A673 (cell line): ENCODE measurements at regions of chr1 and their contacts with region 1.

Region 1: DNA sequence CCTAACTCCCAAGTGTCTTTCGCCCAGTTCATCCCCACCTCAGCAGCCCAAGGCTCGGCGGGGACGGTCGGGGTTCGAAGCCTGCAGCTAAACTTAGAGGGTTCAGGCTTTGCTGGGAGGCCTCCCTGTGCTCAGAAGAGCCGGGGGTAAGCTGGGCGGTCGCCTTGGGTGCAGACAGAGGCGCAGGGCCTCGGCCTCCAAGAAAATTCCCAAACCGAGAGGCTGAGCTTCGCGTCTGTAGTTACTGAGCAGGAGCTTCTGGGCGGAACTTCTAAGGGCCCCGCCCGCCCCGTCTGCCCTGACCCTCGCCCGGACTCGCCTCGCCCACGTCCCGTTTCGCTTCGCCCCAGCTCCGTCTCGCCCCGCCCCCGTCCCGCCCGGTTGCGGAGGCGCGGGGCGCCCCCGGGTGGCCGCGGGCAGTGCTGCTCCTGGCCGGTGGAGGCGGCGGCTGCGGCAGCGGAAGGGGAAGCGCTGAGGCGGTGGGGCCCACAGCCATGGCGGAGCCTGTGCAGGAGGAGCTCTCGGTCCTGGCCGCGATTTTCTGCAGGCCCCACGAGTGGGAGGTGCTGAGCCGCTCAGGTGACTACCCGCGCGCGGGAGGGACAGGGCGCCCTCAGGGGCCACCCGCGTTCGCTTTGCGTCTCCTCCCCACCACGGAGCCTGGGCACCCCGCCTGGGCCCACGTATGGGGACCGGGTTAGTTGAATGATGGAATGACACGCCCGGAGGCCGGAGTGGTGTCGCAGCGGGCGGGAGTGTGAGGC is at the start of gene RWDD3:
- DNase-seq: peak; percentile 94
- H3K4me3 ChIP-seq: peak within 1 kb of the TSS; percentile 88
- H3K27ac ChIP-seq: peak within 1 kb of the TSS; percentile 85
- H3K4me1 ChIP-seq: peaks cover 33% of the 10 kb centered on the region
- H3K27me3 ChIP-seq: peaks cover 6% of the 10 kb centered on the region
- CTCF ChIP-seq: peak; percentile 66
- total RNA-seq, gene RWDD3: 10.2 and 12.1 TPM in 2 replicates

Region 2: GRCh38 chr1:94854458-94855306 is 379.2 kb before region 1 on chr1:
- CTCF ChIA-PET with region 1: interaction called, 7 read pairs
- POLR2A ChIA-PET with region 1: no interaction called
- intact Hi-C with region 1: loop called (anchors 5 kb)
- DNase-seq: peak; percentile 92
- H3K4me3 ChIP-seq: peak overlapping the region; percentile 44
- H3K27ac ChIP-seq: no peak overlapping the region
- H3K4me1 ChIP-seq: no peaks in the 10 kb centered on the region
- H3K27me3 ChIP-seq: no peaks in the 10 kb centered on the region
- CTCF ChIP-seq: peak; percentile 97

Region 3: DNA sequence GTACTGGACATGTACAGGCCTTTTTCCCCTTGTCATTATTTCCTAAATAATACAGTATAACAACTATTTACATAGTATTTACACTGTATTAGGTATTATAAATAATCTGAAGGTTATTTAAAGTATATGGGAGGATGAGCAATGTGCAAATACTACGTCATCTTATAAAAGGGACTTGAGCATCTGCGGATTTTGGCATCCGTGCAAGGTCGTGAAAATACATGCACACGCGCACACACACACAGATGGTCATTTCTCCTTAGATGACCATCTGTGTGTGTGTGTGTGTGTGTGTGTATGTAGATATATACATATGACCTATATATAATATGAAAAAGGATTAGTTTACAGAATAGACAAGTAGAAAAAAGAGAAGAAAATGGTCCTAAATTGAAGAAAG is 176.6 kb before region 1 on chr1:
- CTCF ChIA-PET with region 1: no interaction called
- POLR2A ChIA-PET with region 1: no interaction called
- intact Hi-C with region 1: no loop called
- DNase-seq: no peak
- H3K4me3 ChIP-seq: no peak overlapping the region
- H3K27ac ChIP-seq: no peak overlapping the region
- H3K4me1 ChIP-seq: no peaks in the 10 kb centered on the region
- H3K27me3 ChIP-seq: no peaks in the 10 kb centered on the region
- CTCF ChIP-seq: no peak

Region 4: DNA sequence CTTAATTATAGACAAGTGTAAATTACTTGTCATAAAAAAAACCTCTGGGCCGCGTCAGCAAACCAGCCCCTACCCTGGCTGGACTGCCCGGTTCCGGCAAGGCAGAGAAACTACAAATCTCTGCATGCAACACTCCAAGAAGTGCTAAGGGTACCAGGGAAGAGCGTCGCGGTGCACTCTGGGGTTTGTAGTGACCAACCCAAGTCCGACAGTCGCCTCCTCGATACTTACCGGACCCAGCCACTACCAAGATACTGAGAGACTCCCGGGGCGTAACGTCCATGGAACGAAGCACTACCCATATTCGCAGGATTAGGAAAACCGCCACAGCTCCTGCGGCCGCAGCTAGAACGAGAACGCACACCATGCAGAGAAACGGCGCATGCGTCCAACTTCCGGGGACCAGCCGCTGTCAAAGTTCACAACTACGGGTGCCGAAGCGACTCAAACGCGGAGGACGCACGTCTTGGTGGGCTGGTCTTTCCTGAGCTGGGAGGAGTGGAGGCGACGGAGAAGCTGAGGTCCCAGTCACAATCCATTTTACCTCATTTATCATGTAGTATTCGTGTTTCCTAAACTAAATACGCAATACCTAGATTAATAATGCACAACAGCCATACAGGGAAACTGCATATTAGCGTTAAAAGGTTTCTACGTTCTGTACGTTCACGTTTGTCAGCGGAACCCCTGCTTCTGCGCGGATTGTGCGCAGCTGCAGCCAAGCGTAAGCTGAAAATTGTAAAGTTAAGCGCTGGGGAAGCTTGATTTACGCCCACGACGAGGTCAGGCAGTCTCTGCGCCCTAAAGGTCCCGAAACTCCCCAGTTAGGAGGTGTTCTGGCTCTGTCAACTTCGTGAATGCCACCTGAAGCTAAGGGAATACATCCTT is 161.1 kb before region 1 on chr1 and contains the start of gene ALG14:
- CTCF ChIA-PET with region 1: interaction called, 15 read pairs
- POLR2A ChIA-PET with region 1: interaction called, 3 read pairs
- intact Hi-C with region 1: no loop called
- DNase-seq: peak; percentile 98
- H3K4me3 ChIP-seq: peak within 1 kb of the TSS; percentile 64
- H3K27ac ChIP-seq: peak within 1 kb of the TSS; percentile 91
- H3K4me1 ChIP-seq: no peaks in the 10 kb centered on the region
- H3K27me3 ChIP-seq: peaks cover 11% of the 10 kb centered on the region
- CTCF ChIP-seq: no peak
- total RNA-seq, gene ALG14: 6.4 and 11.3 TPM in 2 replicates

Region 5: DNA sequence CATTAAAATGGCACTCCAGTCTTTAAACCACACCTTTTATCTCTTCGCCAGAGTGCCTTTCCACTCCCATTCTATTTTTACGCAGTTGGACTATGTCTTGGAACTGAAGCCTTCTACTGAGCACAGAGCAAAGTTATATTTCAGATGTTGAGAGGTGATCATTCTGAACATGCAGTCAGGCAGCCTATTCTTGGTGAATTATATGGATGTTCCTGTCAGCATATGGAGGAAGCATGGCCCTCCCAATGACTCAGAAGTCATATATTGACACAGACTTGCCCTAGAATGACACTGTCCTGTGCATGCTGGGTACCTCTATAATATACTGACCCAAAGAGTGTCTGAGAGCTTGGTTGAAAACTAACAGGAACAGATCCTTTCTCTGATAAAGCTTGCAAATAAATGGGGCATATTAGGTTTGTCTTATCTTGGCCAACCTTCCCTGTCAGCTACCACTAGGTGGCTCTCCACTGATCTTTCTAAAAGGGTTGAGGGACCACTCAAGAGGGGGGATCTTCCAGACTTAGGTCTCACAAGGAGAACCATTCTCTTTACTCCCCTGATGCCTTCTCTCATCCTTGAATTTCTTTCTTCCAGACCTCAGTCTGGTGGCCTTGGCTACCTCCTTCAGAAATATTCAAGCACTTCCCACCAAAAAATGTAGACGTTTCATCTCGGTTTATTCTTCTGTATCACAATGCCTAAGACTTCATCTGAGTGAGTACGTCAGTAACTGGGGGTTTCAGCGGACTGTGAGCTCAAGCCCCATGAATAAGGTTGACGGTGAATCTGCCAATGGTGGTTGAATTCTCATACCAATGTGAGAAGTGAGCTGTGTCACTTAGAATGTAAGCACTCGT is 149.4 kb before region 1 on chr1:
- CTCF ChIA-PET with region 1: interaction called, 23 read pairs
- POLR2A ChIA-PET with region 1: no interaction called
- intact Hi-C with region 1: loop called (anchors 1 kb)
- DNase-seq: peak; percentile 70
- H3K4me3 ChIP-seq: no peak overlapping the region
- H3K27ac ChIP-seq: no peak overlapping the region
- H3K4me1 ChIP-seq: no peaks in the 10 kb centered on the region
- H3K27me3 ChIP-seq: peaks cover 23% of the 10 kb centered on the region
- CTCF ChIP-seq: peak; percentile 87

Region 6: DNA sequence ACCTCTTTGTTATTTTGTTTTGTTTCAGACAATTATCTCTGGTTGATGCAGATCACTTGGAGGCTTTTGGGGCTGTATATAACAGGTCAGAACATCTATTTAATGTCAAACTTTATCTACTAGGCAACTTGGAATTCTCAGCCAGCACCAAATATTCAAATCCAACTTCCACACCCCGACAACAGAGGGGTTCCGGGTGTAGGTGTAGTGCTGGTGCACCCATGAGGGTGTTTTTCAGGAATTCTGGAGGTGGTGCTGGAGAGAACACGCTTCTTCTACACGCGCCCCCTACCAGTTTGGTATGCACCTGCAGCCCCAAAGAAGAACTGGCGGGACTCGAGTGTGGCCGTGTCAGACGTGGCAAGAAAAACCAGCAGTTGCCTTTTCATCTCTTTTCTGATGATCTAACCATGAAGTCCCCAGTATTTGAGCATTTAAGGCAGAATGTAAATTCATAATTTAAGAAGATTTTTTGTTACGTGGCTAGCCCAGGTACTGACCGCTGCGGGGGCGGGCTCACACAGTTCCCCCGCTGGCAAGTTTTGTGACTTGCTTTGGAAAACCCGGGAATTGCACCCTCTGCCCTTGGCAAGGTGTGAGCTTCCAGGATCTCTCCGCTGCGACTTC is 117.2 kb before region 1 on chr1:
- CTCF ChIA-PET with region 1: interaction called, 5 read pairs
- POLR2A ChIA-PET with region 1: no interaction called
- intact Hi-C with region 1: loop called (anchors 10 kb)
- DNase-seq: peak; percentile 72
- H3K4me3 ChIP-seq: peak overlapping the region; percentile 63
- H3K27ac ChIP-seq: no peak overlapping the region
- H3K4me1 ChIP-seq: peaks cover 6% of the 10 kb centered on the region
- H3K27me3 ChIP-seq: peaks cover 48% of the 10 kb centered on the region
- CTCF ChIP-seq: peak; percentile 66

Region 7: DNA sequence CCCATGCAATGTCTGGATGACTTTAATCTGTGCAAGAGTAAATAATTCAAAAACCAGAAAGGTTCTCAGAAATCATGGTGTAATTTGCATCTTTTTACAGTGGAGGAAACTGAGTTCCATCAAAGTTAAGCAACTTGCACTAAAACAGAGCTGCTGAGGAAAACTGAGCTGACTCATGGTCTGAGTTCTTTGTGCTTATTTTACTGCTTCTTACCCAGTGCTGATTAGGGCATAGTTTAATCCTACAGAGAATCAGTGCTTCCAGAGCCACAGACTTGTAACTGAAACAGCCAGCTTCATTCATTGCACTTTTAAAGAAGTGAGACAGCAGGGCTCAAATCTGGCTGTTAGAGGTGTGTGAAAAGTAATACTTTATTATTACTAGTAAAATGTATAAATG is 10.8 kb before region 1 on chr1:
- CTCF ChIA-PET with region 1: interaction called, 12 read pairs
- POLR2A ChIA-PET with region 1: no interaction called
- intact Hi-C with region 1: no loop called
- DNase-seq: peak; percentile 35
- H3K4me3 ChIP-seq: no peak overlapping the region
- H3K27ac ChIP-seq: no peak overlapping the region
- H3K4me1 ChIP-seq: no peaks in the 10 kb centered on the region
- H3K27me3 ChIP-seq: no peaks in the 10 kb centered on the region
- CTCF ChIP-seq: no peak

Region 8: DNA sequence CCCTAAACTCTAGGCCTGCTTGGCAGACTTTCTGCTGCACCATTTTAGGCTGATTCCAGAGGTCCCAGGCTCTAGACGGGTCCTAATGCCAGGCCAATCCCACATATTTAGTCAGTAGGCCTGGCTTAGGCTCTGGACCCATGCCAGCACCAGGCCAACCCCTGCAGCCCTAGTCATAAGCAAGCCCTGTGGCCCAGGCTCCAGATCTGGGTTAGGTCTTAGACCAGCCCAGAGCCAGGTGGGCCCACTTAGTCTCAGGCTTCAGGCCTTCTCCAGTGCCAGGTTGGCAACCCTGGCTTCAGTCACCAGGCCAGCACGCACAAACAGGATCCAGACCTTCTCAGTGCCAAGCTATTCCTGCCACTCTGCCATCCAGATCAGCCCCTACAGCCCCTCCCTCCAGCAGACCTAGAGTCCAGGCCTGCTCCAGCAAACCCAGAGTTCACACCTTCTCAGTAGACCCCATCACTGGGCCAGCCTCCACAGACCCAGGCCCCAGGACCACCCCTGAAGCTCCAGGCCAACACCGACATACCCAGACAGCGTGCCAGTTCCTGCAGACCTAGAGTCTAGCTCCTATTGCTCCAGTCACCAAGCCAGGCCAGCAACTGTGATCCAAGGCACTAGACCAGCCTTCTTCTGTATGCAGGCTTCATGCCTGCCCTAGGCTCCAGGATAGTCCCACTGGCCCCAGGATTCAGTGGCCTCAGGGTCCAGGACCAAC is 467.7 kb after region 1 on chr1:
- CTCF ChIA-PET with region 1: no interaction called
- POLR2A ChIA-PET with region 1: no interaction called
- intact Hi-C with region 1: no loop called
- DNase-seq: no peak
- H3K4me3 ChIP-seq: no peak overlapping the region
- H3K27ac ChIP-seq: no peak overlapping the region
- H3K4me1 ChIP-seq: no peaks in the 10 kb centered on the region
- H3K27me3 ChIP-seq: peaks cover 14% of the 10 kb centered on the region
- CTCF ChIP-seq: no peak